ENCODE measurements at regions of chr18 and their contacts with region 1.

Region 1: DNA sequence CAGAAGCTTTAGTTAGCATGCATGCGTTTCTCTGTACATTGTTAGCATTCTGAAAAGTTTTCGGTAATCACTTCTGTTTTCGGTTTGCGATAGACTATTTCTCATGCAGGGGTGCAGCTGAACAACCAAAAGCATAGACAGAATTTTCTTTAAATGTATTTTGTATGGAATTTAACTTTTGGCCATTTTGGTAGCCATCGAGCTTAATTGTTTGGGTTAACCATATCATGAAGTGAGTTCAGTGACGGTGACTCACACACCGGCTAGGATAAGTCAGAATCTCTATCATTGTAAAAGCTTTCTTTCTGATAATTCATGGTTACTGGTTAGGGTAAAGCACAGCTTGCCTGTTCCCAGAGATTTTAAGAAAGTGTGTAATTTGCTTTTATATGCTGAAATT is 107.2 kb downstream of the CD226 start:
- DNase-seq: peak; percentile 82
- ATAC-seq: peak; percentile 78
- H3K4me3 ChIP-seq: no peak overlapping the region
- H3K27ac ChIP-seq: peak overlapping the region; percentile 20; the same call in 1 of the 2 replicates
- H3K4me1 ChIP-seq: peaks cover 9% of the 10 kb centered on the region
- H3K27me3 ChIP-seq: no peaks in the 10 kb centered on the region
- CTCF ChIP-seq: no peak
- POLR2A ChIP-seq: no peak
- RAD21 ChIP-seq: 0 out of 2 replicates have a peak, but pooled peaks have one; percentile 2

Region 2: DNA sequence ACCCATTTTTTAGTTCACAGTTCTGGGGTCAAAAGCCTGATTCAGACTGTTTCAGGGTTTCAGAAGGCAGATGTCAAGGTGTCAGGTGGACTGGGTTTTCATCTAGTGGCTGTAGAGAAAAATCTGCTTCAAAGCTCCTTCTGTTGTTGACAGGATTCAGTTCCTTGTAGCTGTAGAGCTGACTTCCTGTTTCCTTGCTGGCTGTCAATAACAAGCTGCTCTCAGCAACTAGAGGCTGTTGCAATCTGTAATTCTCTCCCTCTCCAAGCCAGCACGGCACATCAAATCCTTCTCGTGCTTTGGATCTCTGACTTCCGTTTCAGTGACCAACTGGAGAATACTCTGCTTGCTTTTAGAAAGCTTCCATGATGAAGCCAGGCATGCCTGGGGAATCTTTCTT is 260.3 kb before region 1 on chr18:
- CTCF ChIA-PET with region 1: no interaction called
- POLR2A ChIA-PET with region 1: interaction called, 24 read pairs
- dilution Hi-C with region 1: no loop called
- in situ Hi-C with region 1: no loop called
- intact Hi-C with region 1: no loop called
- DNase-seq: peak; percentile 28
- ATAC-seq: peak; percentile 51; the same call in 1 of the 2 replicates
- H3K4me3 ChIP-seq: no peak overlapping the region
- H3K27ac ChIP-seq: no peak overlapping the region
- H3K4me1 ChIP-seq: no peaks in the 10 kb centered on the region
- H3K27me3 ChIP-seq: no peaks in the 10 kb centered on the region
- CTCF ChIP-seq: no peak
- POLR2A ChIP-seq: no peak
- RAD21 ChIP-seq: no peak

Region 3: DNA sequence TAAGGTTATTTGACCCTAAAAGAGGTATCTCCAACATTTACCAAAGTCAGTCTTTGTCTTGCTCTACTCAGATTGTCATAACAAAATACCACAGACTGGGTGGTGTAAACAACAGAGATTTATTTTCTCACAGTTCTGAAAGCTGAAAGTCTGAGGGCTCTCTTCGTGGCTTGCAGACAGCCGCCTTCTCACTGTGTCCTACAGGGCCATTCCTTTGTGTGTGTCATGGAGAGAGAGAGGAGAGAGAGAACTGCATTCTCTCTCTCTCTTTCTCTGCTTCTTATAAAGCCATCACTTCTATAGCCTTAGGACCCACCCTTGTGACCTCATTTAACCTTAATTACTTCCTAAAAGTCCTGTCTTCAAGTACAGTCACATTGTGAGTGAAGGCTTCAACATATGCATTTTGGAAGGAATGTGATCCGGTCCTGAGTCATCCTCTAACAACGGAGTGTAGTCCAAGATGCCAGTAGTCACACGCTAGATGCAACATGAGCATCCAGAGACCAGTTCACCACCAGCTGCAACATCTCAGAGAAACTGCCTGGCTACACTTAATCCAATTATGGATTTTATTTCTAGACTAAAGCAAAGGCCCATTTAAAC is 23.0 kb before region 1 on chr18:
- CTCF ChIA-PET with region 1: no interaction called
- POLR2A ChIA-PET with region 1: interaction called, 3 read pairs
- dilution Hi-C with region 1: no loop called
- in situ Hi-C with region 1: no loop called
- intact Hi-C with region 1: loop called (anchors 1 kb)
- DNase-seq: peak; percentile 98
- ATAC-seq: peak; percentile 96
- H3K4me3 ChIP-seq: no peak overlapping the region
- H3K27ac ChIP-seq: peak overlapping the region; percentile 92; the same call in 1 of the 2 replicates
- H3K4me1 ChIP-seq: peaks cover 10% of the 10 kb centered on the region
- H3K27me3 ChIP-seq: no peaks in the 10 kb centered on the region
- CTCF ChIP-seq: no peak
- POLR2A ChIP-seq: no peak
- RAD21 ChIP-seq: no peak; the same call in 1 of the 2 replicates

Region 4: DNA sequence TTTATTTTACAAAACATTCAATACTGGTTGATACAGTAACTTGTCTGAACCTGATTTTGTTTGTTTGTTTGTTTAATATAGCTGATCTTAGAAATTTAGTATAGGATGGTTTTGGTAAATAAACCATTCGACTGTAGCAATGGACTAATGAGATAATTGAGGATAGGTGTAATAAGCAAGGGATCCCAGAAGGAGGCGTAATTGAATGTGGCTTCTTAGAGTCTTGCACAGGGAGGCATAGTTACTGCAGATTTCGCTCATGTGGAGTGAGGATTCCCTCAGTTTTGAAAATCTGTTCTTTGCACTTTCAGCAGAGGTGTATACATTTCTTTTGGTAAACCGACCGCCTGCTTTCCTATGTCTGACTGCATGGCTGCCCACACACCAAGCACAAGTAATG is 1158.0 kb after region 1 on chr18:
- CTCF ChIA-PET with region 1: no interaction called
- POLR2A ChIA-PET with region 1: no interaction called
- dilution Hi-C with region 1: no loop called
- in situ Hi-C with region 1: no loop called
- intact Hi-C with region 1: no loop called
- DNase-seq: no peak
- ATAC-seq: no peak
- H3K4me3 ChIP-seq: no peak overlapping the region
- H3K27ac ChIP-seq: no peak overlapping the region
- H3K4me1 ChIP-seq: no peaks in the 10 kb centered on the region
- H3K27me3 ChIP-seq: no peaks in the 10 kb centered on the region
- CTCF ChIP-seq: 0 out of 2 replicates have a peak, but pooled peaks have one; percentile 9
- POLR2A ChIP-seq: no peak
- RAD21 ChIP-seq: no peak

Measured in IMR-90 (cell line).